Activated CD8-positive, alpha-beta T cell treated with anti-CD3 and anti-CD28 coated beads for 36 hours (primary cell): ENCODE measurements at regions of chr1 and their contacts with region 1.

Region 1: GRCh38 chr1:203340112-203340804 is 10.7 kb downstream of the FMOD start:
- DNase-seq: peak; percentile 71
- ATAC-seq: peak; percentile 81
- H3K4me3 Mint-ChIP-seq: no peak overlapping the region
- H3K27ac Mint-ChIP-seq: no peak overlapping the region
- H3K4me1 Mint-ChIP-seq: peaks cover 17% of the 10 kb centered on the region
- H3K27me3 Mint-ChIP-seq: peaks cover 11% of the 10 kb centered on the region
- CTCF ChIP-seq: peak; percentile 91

Region 2: DNA sequence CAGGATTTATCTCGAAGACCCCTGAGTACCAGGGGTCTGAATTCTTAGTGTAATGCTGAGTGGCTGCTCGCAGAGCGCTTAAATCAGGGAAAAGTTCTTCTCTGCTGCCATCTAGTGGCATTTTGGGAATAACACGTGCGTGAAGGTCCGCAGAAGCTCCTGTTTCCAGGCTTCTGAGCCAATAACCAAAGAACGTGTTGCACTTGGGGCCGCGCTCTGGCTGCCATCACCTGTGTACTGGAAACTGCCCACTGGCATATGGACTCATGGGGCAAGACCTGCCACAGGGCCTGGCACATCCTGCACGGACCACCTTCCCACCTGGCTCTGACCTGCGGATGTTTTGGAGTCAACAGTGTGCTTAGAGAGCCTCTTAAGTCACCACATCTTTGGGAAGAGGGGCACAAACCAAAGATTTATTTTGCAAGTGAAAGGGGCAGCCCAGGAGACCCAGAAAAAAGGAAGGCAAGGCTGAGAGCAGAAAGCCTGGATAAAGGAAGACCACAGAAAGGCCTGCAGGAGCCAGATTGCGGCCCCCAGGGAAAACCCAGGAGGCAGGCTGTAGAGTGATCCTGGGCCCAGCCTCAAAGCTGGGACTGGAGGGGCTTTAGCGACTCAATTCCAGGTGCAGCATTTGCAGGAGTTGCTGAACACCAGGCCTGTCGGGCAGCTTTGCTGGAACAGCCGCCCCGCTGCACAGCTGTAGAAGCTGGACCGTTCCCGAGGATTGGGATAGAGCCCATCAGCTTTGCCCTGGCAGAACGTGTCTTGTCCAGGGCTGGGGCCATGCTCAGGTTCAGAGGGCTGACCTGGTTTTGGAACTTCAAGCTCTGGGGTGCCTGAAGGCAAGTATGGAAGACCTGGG is 123.8 kb before region 1 on chr1:
- CTCF ChIA-PET with region 1: no interaction called
- POLR2A ChIA-PET with region 1: no interaction called
- intact Hi-C with region 1: no loop called
- DNase-seq: peak; percentile 69
- ATAC-seq: peak; percentile 67
- H3K4me3 Mint-ChIP-seq: no peak overlapping the region
- H3K27ac Mint-ChIP-seq: no peak overlapping the region
- H3K4me1 Mint-ChIP-seq: no peaks in the 10 kb centered on the region
- H3K27me3 Mint-ChIP-seq: no peaks in the 10 kb centered on the region
- CTCF ChIP-seq: peak; percentile 83

Region 3: GRCh38 chr1:203273206-203273868 is 66.9 kb before region 1 on chr1:
- CTCF ChIA-PET with region 1: interaction called, 1,114 read pairs
- POLR2A ChIA-PET with region 1: interaction called, 31 read pairs
- intact Hi-C with region 1: loop called (anchors 1 kb)
- DNase-seq: peak; percentile 94
- ATAC-seq: peak; percentile 73
- H3K4me3 Mint-ChIP-seq: peak overlapping the region; percentile 77
- H3K27ac Mint-ChIP-seq: peak overlapping the region; percentile 83
- H3K4me1 Mint-ChIP-seq: peaks cover 57% of the 10 kb centered on the region
- H3K27me3 Mint-ChIP-seq: no peaks in the 10 kb centered on the region
- CTCF ChIP-seq: peak; percentile 93

Region 4: GRCh38 chr1:203299169-203299568 is 41.1 kb before region 1 on chr1:
- CTCF ChIA-PET with region 1: interaction called, 12 read pairs
- POLR2A ChIA-PET with region 1: no interaction called
- intact Hi-C with region 1: no loop called
- DNase-seq: no peak
- ATAC-seq: no peak
- H3K4me3 Mint-ChIP-seq: no peak overlapping the region
- H3K27ac Mint-ChIP-seq: no peak overlapping the region
- H3K4me1 Mint-ChIP-seq: peaks cover 63% of the 10 kb centered on the region
- H3K27me3 Mint-ChIP-seq: no peaks in the 10 kb centered on the region
- CTCF ChIP-seq: no peak

Region 5: DNA sequence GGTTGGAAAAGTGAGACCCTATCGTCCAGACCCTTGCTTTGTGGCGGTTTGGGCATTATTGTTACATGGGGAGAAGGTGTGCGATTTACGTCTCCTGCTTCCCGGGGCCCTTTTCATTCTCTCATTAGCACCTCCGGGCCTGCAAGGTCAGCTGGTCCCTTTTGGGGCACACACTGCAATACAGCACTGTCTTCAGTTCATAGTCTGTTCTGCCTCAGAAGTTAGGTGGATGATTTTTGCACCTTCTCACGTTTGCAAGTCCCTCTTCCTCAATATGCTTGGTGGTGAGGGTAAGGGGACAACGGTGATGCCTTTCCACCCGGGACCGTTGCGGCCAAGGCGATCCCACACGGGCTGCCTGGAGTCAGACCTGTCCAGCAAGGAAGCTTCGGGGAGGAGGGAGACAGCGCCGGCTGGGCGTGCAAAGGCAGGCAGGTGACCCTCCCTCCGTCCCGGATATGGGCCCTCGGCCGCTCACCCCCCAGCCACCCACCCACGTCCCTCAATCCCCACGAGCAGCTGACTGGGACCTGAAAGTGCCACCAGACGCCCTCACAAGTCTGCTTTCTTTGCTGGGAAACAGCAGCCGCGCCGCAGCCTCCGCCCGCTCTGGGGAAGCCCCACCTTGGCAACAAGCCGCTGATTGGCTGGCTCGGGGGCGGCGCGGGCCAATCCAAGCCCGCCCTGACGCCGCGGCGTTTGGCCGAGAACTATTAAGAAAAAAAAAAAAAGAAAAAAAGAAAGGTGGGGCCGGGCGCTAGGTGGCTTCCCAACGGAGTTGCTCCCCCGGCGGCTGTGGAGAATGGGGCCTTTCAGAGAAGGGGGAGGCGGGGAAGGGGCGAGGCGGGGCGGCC is 13.2 kb before region 1 on chr1:
- CTCF ChIA-PET with region 1: interaction called, 161 read pairs
- POLR2A ChIA-PET with region 1: interaction called, 7 read pairs
- intact Hi-C with region 1: no loop called
- DNase-seq: peak; percentile 96
- ATAC-seq: peak; percentile 82
- H3K4me3 Mint-ChIP-seq: peak overlapping the region; percentile 75
- H3K27ac Mint-ChIP-seq: peak overlapping the region; percentile 93
- H3K4me1 Mint-ChIP-seq: peaks cover 68% of the 10 kb centered on the region
- H3K27me3 Mint-ChIP-seq: no peaks in the 10 kb centered on the region
- CTCF ChIP-seq: no peak

Region 6: DNA sequence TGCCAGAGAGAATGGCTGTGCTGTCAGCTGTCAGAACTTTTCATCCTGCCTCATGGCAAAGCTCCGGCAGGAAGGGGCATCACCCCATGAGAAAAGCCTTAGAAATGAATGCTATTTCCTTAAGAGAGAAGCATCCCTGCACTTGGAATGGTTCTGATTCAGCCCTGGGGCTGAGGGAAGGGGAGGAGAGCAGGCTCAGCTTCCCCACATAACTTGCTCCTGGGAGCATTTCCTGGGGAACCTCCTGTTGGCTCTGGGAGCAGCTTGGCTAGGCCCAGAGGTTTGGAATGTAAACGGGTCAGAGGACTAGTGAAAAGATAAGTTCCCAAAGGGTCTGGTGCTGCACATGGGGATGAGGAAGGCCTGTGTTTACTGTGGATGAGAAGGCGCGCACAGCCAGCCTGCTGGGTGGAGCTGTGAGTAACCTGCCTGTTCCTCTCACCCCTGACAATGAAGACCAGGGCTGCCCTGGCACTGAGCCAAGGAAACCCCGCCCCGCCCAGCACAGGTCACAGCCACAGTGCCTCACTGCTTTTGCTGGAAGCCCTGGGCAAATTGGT is 140.3 kb after region 1 on chr1:
- CTCF ChIA-PET with region 1: interaction called, 125 read pairs
- POLR2A ChIA-PET with region 1: no interaction called
- intact Hi-C with region 1: no loop called
- DNase-seq: peak; percentile 59
- ATAC-seq: no peak
- H3K4me3 Mint-ChIP-seq: no peak overlapping the region
- H3K27ac Mint-ChIP-seq: no peak overlapping the region
- H3K4me1 Mint-ChIP-seq: peaks cover 7% of the 10 kb centered on the region
- H3K27me3 Mint-ChIP-seq: peaks cover 5% of the 10 kb centered on the region
- CTCF ChIP-seq: no peak

Region 7: GRCh38 chr1:203492082-203492747 is 152.0 kb after region 1 on chr1:
- CTCF ChIA-PET with region 1: interaction called, 125 read pairs
- POLR2A ChIA-PET with region 1: interaction called, 3 read pairs
- intact Hi-C with region 1: loop called (anchors 2 kb)
- DNase-seq: no peak
- ATAC-seq: no peak
- H3K4me3 Mint-ChIP-seq: no peak overlapping the region
- H3K27ac Mint-ChIP-seq: no peak overlapping the region
- H3K4me1 Mint-ChIP-seq: peaks cover 6% of the 10 kb centered on the region
- H3K27me3 Mint-ChIP-seq: no peaks in the 10 kb centered on the region
- CTCF ChIP-seq: no peak

Region 8: DNA sequence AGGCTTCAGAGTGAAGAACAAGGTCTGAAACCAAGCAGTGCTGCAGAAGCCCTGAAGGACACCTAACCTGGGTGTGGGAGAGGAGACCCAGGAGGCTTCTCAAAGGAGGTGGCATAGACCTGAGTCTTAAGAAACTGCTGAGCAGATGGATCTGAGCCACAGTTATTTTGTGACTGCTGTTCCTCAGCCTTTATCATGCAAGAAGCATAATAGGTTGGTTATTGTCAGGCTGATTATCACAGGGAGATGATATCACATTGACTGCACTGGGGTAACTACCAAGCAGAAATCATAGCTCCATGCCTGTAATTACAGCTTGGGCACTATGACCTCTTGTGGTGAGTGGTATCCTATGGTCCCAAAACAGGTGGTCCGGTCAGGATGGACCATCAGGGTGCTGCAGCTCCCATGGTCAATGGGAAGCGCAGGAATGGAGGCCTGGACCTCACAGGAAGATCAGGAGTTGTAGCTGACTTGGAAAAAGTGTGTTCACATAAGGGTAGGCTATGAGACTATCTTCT is 274.9 kb after region 1 on chr1:
- CTCF ChIA-PET with region 1: no interaction called
- POLR2A ChIA-PET with region 1: no interaction called
- intact Hi-C with region 1: no loop called
- DNase-seq: no peak
- ATAC-seq: no peak
- H3K4me3 Mint-ChIP-seq: no peak overlapping the region
- H3K27ac Mint-ChIP-seq: no peak overlapping the region
- H3K4me1 Mint-ChIP-seq: peaks cover 16% of the 10 kb centered on the region
- H3K27me3 Mint-ChIP-seq: no peaks in the 10 kb centered on the region
- CTCF ChIP-seq: no peak